ENCODE measurements at regions of chr6 and their contacts with region 1.

Region 1: DNA sequence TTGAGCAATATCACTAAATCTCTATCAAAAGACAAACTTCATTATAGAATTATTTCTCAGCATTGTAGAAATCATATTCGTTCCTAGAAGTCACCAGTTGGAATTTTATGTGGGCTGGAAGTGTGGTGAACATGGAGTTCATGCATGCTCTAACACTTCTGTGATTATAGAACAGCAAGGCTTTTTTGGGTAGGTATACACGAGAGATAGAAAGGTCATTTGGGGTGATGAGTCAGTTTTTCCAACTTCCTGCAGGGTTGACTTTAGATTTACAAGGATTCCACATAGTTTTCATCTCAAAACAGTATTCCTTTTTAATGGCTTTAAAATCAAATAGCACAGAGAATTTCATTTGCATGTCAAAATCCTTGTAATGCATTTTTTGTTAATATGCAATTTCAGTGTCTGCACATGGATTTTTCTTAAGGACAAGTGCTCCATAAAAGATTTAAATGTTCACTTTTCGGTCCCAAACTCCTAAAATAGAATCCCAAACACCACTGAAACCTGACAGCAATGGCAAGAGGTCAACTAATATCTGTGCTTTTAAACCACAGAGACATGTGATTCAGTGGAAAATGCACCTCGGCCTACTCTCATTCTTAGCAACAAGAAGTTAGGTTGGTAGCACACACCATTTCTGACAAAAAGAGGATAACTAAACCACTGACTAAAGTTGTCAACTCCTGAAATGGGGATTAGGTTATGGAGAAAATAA is 211.0 kb downstream of the MOXD1 start:
- DNase-seq: no peak
- H3K4me3 ChIP-seq: no peak overlapping the region
- H3K27ac ChIP-seq: peak overlapping the region; percentile 21
- H3K4me1 ChIP-seq: no peaks in the 10 kb centered on the region
- H3K27me3 ChIP-seq: no peaks in the 10 kb centered on the region
- CTCF ChIP-seq: no peak
- POLR2A ChIP-seq: no peak

Region 2: GRCh38 chr6:131038597-131039344 is 1151.5 kb before region 1 on chr6:
- intact Hi-C with region 1: no loop called
- DNase-seq: no peak
- H3K4me3 ChIP-seq: no peak overlapping the region
- H3K27ac ChIP-seq: no peak overlapping the region
- H3K4me1 ChIP-seq: peaks cover 21% of the 10 kb centered on the region
- H3K27me3 ChIP-seq: no peaks in the 10 kb centered on the region
- CTCF ChIP-seq: no peak
- POLR2A ChIP-seq: no peak

Region 3: DNA sequence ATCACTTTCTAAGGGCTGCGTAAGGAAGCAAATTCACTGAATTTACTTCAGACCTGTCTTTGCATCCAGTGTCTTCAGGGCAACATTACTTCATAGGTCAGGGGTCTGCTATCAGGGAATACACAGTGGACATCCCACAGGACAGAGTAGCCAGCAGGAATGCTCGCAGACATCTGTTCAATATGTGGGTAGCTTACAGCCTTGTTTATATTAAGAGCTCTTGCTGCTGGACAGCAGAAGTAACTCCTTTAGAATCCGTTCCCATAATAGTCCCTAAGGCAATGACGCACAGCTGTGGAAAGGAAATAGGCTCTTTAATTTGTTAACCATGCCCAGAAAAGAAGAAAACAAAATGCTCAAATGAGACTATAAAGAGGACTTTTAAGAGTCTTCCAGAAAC is 12.3 kb after region 1 on chr6:
- intact Hi-C with region 1: no loop called
- DNase-seq: no peak
- H3K4me3 ChIP-seq: no peak overlapping the region
- H3K27ac ChIP-seq: peak overlapping the region; percentile 67
- H3K4me1 ChIP-seq: peaks cover 9% of the 10 kb centered on the region
- H3K27me3 ChIP-seq: no peaks in the 10 kb centered on the region
- CTCF ChIP-seq: no peak
- POLR2A ChIP-seq: no peak

Region 4: GRCh38 chr6:133710826-133711225 is 1520.6 kb after region 1 on chr6:
- intact Hi-C with region 1: loop called (anchors 5 kb)
- DNase-seq: no peak
- H3K4me3 ChIP-seq: no peak overlapping the region
- H3K27ac ChIP-seq: no peak overlapping the region
- H3K4me1 ChIP-seq: peaks cover 4% of the 10 kb centered on the region
- H3K27me3 ChIP-seq: no peaks in the 10 kb centered on the region
- CTCF ChIP-seq: no peak
- POLR2A ChIP-seq: no peak